ENCODE measurements at regions of chr2 and their contacts with region 1.

Region 1: GRCh38 chr2:202911512-202912341 is at the starts of genes CARF and WDR12:
- DNase-seq: peak; percentile 82 to 95 (median 89)
- ATAC-seq: peak; percentile 83
- H3K4me3 Mint-ChIP-seq: peak within 1 kb of the TSS; percentile 90 to 100 (median 98)
- H3K27ac Mint-ChIP-seq: peak within 1 kb of the TSS; percentile 94 to 99 (median 98)
- H3K4me1 Mint-ChIP-seq: peaks cover 15 to 40% (median 31%) of the 10 kb centered on the region in 4 donors
- H3K27me3 Mint-ChIP-seq: no peaks in the 10 kb centered on the region
- polyA plus RNA-seq, gene CARF: 4.1 to 10.1 (median 7.7) TPM
- polyA plus RNA-seq, gene WDR12: 13.5 to 19.6 (median 16.9) TPM

Region 2: GRCh38 chr2:202848813-202849212 is 62.9 kb before region 1 on chr2:
- POLR2A ChIA-PET with region 1: no interaction called
- DNase-seq: peak in 4 of 10 donors; percentile 8 to 27 (median 10)
- ATAC-seq: peak in 1 of 2 donors; percentile 57
- H3K4me3 Mint-ChIP-seq: peak overlapping the region in 3 of 10 donors; percentile 7 to 36 (median 31)
- H3K27ac Mint-ChIP-seq: peak overlapping the region in 8 of 10 donors; percentile 4 to 84 (median 48)
- H3K4me1 Mint-ChIP-seq: peaks cover 7 to 9% (median 9%) of the 10 kb centered on the region in 4 donors
- H3K27me3 Mint-ChIP-seq: peaks cover 0 to 1% (median 0%) of the 10 kb centered on the region in 5 donors

Region 3: DNA sequence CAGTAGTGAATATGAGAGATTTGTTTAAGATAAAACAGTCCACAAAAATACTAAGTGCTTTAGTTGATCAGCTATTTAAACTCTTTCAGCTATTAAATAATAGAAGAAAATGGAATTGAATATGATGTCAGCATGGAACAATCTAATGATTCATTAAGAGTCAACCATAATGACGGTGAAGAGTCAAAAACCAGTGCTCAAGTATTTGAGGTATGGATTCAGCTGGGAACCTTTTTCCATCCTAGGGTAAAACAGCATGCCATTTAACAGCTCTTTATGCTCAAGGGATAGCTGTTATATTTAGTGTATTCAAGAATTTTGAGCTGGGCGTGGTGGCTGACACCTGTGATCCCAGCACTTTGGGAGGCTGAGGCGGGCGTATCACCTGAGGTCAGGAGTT is 30.0 kb after region 1 on chr2:
- POLR2A ChIA-PET with region 1: no interaction called
- DNase-seq: no peak
- ATAC-seq: no peak
- H3K4me3 Mint-ChIP-seq: no peak overlapping the region
- H3K27ac Mint-ChIP-seq: no peak overlapping the region
- H3K4me1 Mint-ChIP-seq: peaks cover 0 to 6% (median under 1%) of the 10 kb centered on the region in 4 donors
- H3K27me3 Mint-ChIP-seq: no peaks in the 10 kb centered on the region

Region 4: GRCh38 chr2:203025592-203025991 is 113.9 kb after region 1 on chr2:
- POLR2A ChIA-PET with region 1: no interaction called
- DNase-seq: no peak
- ATAC-seq: no peak
- H3K4me3 Mint-ChIP-seq: no peak overlapping the region
- H3K27ac Mint-ChIP-seq: peak overlapping the region in 2 of 10 donors; percentile 15 to 42
- H3K4me1 Mint-ChIP-seq: peaks cover 1 to 6% (median 2%) of the 10 kb centered on the region in 4 donors
- H3K27me3 Mint-ChIP-seq: no peaks in the 10 kb centered on the region

Region 5: DNA sequence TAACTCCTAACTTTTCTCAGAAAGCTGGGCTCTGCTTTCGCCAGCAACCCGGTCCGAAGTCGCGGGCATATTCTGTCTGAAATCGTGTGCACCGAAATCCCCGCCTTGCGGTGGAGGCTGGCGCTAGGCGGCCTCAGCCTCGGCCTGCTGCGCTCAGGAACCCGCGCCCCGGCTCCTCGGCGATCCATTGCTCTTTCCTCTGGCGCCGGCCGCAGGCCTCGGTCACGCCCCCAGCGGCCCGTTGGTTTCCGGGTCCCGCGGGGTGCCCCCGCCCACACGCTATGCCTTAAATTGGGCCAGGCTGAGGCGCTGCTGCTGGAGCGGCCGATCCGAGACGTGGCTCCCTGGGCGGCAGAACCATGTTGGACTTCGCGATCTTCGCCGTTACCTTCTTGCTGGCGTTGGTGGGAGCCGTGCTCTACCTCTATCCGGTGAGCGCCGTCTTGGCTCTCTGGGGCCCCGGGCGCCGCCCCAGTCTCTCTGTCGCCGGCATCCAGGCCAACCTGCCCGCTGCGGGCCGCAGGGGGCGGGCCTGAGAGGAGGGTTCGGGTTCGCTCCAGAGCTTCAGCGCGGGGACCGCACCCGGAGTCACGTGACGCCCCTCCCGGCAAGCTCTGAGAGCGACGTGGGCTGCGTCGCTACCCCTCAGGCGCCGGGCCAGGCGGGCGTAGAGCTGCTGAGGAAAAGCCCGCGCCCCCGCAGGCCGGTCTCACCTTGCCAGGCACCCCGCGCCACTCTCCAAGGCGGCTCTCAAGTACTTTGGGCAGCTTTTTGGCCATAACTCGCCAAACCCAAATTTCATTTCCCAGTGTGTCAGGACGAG is 327.2 kb after region 1 on chr2 and contains the start of gene CYP20A1:
- POLR2A ChIA-PET with region 1: interaction called, 15 read pairs
- DNase-seq: peak; percentile 93 to 99 (median 97)
- ATAC-seq: peak; percentile 86
- H3K4me3 Mint-ChIP-seq: peak within 1 kb of the TSS; percentile 94 to 100 (median 98)
- H3K27ac Mint-ChIP-seq: peak within 1 kb of the TSS; percentile 96 to 100 (median 99)
- H3K4me1 Mint-ChIP-seq: peaks cover 24 to 43% (median 39%) of the 10 kb centered on the region in 4 donors
- H3K27me3 Mint-ChIP-seq: no peaks in the 10 kb centered on the region
- polyA plus RNA-seq, gene CYP20A1: 19.3 to 36.2 (median 22.7) TPM

Measured in naive thymus-derived CD8-positive, alpha-beta T cell (primary cell).